Activated CD4-positive, alpha-beta T cell treated with anti-CD3 and anti-CD28 coated beads, Interleukin-2, amount 10 ng/mL, durations not matched to agents 24 days and 14 days (primary cell): ENCODE measurements at regions of chr15 and their contacts with region 1.

Region 1: GRCh38 chr15:64247906-64248541 is 85.2 kb upstream of the PPIB start:
- DNase-seq: peak; percentile 79
- H3K4me3 Mint-ChIP-seq: no peak overlapping the region
- H3K27ac Mint-ChIP-seq: peak overlapping the region; percentile 64
- H3K4me1 Mint-ChIP-seq: peaks cover 38% of the 10 kb centered on the region
- H3K27me3 Mint-ChIP-seq: no peaks in the 10 kb centered on the region

Region 2: DNA sequence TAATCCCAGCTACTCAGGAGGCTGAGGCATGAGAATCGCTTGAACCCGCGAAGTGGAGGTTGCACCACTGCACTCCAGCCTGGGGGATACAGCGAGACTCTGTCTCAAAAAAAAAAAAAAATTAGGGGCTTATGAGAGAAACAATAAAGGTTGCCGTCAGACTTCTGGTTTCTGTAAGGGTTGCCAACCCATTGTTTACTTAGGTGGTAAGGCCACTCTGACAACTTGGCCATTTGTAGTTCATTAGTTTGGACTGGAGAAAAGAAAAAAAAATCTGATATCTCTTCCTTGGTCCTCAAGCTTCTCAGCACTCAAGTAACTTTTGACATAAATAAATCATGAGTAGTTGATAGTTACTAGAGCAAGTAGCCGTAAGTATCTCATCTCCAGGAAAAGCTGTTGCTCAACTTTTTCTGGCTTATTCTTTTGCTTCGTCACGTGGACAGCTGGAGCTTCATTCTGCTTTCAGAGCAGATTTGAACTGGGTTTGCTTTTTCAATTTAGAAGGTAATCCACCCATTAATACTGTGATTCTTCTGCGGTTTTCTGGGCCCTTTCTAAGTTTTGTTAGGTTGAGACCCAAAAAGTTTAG is 142.8 kb before region 1 on chr15:
- intact Hi-C with region 1: no loop called
- DNase-seq: no peak
- H3K4me3 Mint-ChIP-seq: no peak overlapping the region
- H3K27ac Mint-ChIP-seq: no peak overlapping the region
- H3K4me1 Mint-ChIP-seq: peaks cover 13% of the 10 kb centered on the region
- H3K27me3 Mint-ChIP-seq: no peaks in the 10 kb centered on the region

Region 3: GRCh38 chr15:64187396-64188191 is 60.4 kb before region 1 on chr15:
- intact Hi-C with region 1: loop called (anchors 2 kb)
- DNase-seq: no peak
- H3K4me3 Mint-ChIP-seq: no peak overlapping the region
- H3K27ac Mint-ChIP-seq: peak overlapping the region; percentile 77
- H3K4me1 Mint-ChIP-seq: peaks cover 17% of the 10 kb centered on the region
- H3K27me3 Mint-ChIP-seq: no peaks in the 10 kb centered on the region

Region 4: GRCh38 chr15:64224511-64224910 is 23.5 kb before region 1 on chr15:
- intact Hi-C with region 1: loop called (anchors 2 kb)
- DNase-seq: no peak
- H3K4me3 Mint-ChIP-seq: no peak overlapping the region
- H3K27ac Mint-ChIP-seq: no peak overlapping the region
- H3K4me1 Mint-ChIP-seq: peaks cover 18% of the 10 kb centered on the region
- H3K27me3 Mint-ChIP-seq: no peaks in the 10 kb centered on the region

Region 5: GRCh38 chr15:64263567-64263966 is 15.5 kb after region 1 on chr15:
- intact Hi-C with region 1: loop called (anchors 1 kb)
- DNase-seq: no peak
- H3K4me3 Mint-ChIP-seq: no peak overlapping the region
- H3K27ac Mint-ChIP-seq: no peak overlapping the region
- H3K4me1 Mint-ChIP-seq: peaks cover 31% of the 10 kb centered on the region
- H3K27me3 Mint-ChIP-seq: no peaks in the 10 kb centered on the region

Region 6: DNA sequence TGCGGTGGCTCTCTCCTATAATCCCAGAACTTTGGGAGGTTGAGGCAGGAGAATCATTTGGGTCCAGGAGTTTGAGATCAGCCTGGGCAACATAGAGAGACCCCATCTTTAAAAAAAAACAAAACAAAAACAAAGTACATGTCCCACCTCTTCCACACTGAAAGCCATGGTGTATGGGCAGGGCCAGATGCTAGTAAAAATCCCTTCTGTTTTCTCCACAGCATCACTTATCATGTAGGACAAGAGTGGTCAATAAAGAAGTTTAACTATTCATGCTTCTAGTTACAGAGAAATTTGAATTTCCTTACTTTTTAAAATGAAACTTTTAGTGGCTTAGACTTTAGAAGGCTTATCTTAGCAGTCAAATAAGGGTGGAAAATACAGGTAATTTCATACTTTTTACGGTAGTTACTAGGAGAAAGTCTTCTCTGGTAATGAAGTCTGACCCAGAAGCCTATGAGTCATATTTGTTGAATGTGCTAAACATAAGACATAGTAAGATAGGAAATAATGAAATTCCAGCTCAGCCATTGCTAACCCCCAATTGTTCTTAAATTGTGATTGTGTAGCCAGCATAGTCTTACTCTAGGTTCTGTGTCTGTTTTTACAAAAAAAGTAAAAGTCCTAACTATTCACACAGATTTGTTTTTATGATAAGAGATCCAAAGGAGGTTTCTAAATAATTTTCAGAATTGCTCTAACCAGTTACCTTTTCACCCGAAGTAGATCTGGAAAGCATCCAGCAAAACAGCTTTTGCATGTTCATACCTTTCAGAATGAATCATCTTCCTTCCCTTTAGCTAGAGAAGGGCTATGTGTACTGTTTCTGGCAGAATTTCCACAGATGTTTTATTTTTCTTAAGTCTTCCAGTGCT is 196.0 kb after region 1 on chr15:
- intact Hi-C with region 1: loop called (anchors 1 kb)
- DNase-seq: peak; percentile 70
- H3K4me3 Mint-ChIP-seq: peak overlapping the region; percentile 76
- H3K27ac Mint-ChIP-seq: peak overlapping the region; percentile 94
- H3K4me1 Mint-ChIP-seq: peaks cover 40% of the 10 kb centered on the region
- H3K27me3 Mint-ChIP-seq: no peaks in the 10 kb centered on the region